ENCODE measurements at regions of chr9 and their contacts with region 1.

Region 1: GRCh38 chr9:36400332-36401163 is 479 bp upstream of the RNF38 start:
- DNase-seq: peak; percentile 89 to 94 (median 92)
- ATAC-seq: peak; percentile 78 to 96 (median 93)
- H3K4me3 ChIP-seq: peak overlapping the region; percentile 76 to 88 (median 84)
- H3K27ac ChIP-seq: peak overlapping the region; percentile 72 to 96 (median 92)
- H3K4me1 ChIP-seq: peaks cover 0 to 53% (median 20%) of the 10 kb centered on the region in 12 donors
- H3K27me3 ChIP-seq: no peaks in the 10 kb centered on the region
- CTCF ChIP-seq: peak in 5 of 12 donors; percentile 13 to 37 (median 30)
- POLR2A ChIP-seq: peak in 1 of 2 donors; percentile 49

Region 2: GRCh38 chr9:36337865-36338264 is 62.7 kb before region 1 on chr9:
- intact Hi-C with region 1: no loop called
- DNase-seq: peak in 4 of 5 donors; percentile 58 to 70 (median 60)
- ATAC-seq: peak; percentile 94 to 96 (median 96)
- H3K4me3 ChIP-seq: no peak overlapping the region
- H3K27ac ChIP-seq: peak overlapping the region in 10 of 12 donors; percentile 6 to 74 (median 41)
- H3K4me1 ChIP-seq: peaks cover 0 to 16% (median 4%) of the 10 kb centered on the region in 12 donors
- H3K27me3 ChIP-seq: no peaks in the 10 kb centered on the region
- CTCF ChIP-seq: no peak
- POLR2A ChIP-seq: no peak

Region 3: GRCh38 chr9:36487482-36488388 is 87.2 kb after region 1 on chr9:
- intact Hi-C with region 1: loop called in 4 of 10 experiments (anchors 5 to 10 kb)
- DNase-seq: peak; percentile 93 to 96 (median 94)
- ATAC-seq: peak; percentile 96 to 99 (median 98)
- H3K4me3 ChIP-seq: peak overlapping the region; percentile 15 to 99 (median 86)
- H3K27ac ChIP-seq: peak overlapping the region; percentile 86 to 97 (median 92)
- H3K4me1 ChIP-seq: peaks cover 3 to 34% (median 19%) of the 10 kb centered on the region in 12 donors
- H3K27me3 ChIP-seq: no peaks in the 10 kb centered on the region
- CTCF ChIP-seq: peak in 4 of 12 donors; percentile 3 to 33 (median 12)
- POLR2A ChIP-seq: peak in 1 of 2 donors; percentile 88